Calu3 (cell line): ENCODE measurements at regions of chr6 and their contacts with region 1.

Region 1: DNA sequence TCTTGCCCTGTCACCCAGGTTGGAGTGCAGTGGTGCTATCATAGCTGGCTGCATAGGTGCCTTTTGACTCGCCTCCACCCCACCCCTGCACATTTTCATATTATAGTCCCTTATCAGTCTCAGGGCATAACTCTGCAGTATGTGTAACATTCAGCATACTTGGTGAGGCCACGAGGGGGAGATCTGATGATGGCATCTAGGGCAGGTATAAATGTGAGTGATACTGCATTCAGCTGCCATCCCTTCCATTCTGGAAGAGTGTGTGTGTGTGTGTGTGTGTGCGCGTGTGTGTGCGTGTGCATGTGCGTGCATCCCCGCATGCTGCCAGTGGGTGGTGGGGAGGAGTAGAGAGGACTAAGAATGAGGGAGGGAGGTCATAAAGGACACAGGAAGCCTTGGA is 81.4 kb downstream of the JARID2 start:
- DNase-seq: peak; percentile 19
- H3K4me3 Mint-ChIP-seq: no peak overlapping the region
- H3K27ac Mint-ChIP-seq: no peak overlapping the region
- H3K4me1 Mint-ChIP-seq: peaks cover 21% of the 10 kb centered on the region
- H3K27me3 Mint-ChIP-seq: no peaks in the 10 kb centered on the region
- CTCF ChIP-seq: no peak

Region 2: GRCh38 chr6:15171026-15171425 is 156.2 kb before region 1 on chr6:
- CTCF ChIA-PET with region 1: no interaction called
- intact Hi-C with region 1: no loop called
- DNase-seq: no peak
- H3K4me3 Mint-ChIP-seq: no peak overlapping the region
- H3K27ac Mint-ChIP-seq: no peak overlapping the region
- H3K4me1 Mint-ChIP-seq: no peaks in the 10 kb centered on the region
- H3K27me3 Mint-ChIP-seq: no peaks in the 10 kb centered on the region
- CTCF ChIP-seq: no peak

Region 3: DNA sequence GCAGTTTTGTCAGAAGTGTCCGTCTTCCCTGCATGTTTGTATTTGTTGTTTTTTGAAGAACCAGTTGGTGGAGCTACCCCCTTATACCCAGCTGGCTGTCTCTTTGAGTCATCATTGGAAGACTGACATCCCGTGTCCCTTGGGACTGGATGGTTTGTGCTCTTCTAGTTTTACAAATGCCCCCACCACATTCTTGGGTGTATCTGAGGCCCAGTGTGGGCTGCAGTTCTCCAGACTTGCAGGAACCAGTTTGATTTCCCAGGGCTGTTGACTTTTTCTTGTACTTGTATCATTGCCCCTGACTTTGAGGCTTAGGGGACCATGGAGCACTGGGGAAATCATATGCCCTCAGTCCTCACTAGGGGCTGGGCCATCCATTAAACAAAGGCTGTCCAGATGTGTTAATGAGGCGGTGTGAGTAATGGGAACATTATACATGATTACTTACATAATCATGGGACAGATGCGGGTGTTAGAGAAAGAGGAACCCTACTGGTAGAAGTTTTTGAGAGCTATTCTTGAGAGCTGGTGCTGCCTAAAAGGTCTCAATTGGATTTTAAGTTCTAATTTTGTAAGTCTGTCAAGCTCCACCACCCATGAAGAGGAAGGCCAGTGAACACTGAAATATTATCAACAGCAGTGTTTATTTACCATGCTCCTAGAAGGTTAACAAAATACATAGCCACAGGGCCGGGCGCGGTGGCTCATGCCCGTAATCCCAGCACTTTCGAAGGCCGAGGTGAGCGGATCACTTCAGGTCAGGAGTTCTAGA is 73.0 kb before region 1 on chr6:
- CTCF ChIA-PET with region 1: no interaction called
- intact Hi-C with region 1: loop called (anchors 10 kb)
- DNase-seq: no peak
- H3K4me3 Mint-ChIP-seq: no peak overlapping the region
- H3K27ac Mint-ChIP-seq: no peak overlapping the region
- H3K4me1 Mint-ChIP-seq: peaks cover 16% of the 10 kb centered on the region
- H3K27me3 Mint-ChIP-seq: no peaks in the 10 kb centered on the region
- CTCF ChIP-seq: no peak

Region 4: DNA sequence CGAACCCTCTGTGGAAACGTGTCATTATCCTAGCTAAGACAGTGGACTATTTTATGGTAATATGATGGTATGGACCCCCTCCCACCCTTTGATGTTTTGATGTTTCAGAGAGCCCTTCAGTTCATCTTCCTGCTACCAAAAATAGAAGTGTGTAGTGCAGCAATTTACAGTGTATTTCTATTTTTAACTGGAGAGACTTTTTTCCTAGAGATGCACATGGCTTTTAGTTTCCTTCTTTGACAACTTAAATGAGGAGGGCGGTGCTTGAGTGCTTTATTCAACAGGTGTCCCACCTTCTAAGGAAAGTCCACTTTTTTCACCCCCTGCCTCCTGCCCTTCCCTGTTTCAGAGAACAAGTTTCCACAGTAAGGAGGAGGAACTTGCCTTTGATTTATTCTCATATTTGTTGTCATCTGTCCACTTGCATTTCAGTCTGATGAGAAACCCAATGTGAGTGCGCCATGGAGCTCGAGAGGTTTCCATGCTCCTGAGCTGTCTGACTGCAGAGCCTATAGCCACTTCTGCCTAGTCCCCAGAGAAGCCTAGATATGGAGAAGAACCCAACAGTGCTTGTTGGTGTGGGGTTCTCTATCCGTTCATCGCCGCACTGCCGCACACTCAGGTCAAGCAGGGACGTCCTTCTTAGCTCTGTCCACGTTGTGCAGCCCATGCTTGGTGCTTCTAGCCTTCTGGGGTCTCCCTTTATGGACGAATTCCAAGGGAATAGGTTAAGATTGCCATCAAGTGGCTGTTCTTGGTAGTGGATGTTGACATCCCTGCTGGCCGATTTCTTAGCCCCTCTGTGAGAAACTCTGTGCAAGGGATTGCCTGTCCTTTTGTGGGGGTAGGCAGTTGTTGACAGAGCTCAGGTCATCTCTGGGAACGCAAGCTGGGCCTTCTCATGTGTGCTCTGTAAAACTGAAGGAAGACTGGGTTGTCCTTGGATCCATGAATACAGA is 62.8 kb after region 1 on chr6:
- CTCF ChIA-PET with region 1: no interaction called
- intact Hi-C with region 1: loop called (anchors 5 kb)
- DNase-seq: peak; percentile 15
- H3K4me3 Mint-ChIP-seq: no peak overlapping the region
- H3K27ac Mint-ChIP-seq: no peak overlapping the region
- H3K4me1 Mint-ChIP-seq: peaks cover 7% of the 10 kb centered on the region
- H3K27me3 Mint-ChIP-seq: no peaks in the 10 kb centered on the region
- CTCF ChIP-seq: peak; percentile 50

Region 5: GRCh38 chr6:15441215-15441868 is 114.1 kb after region 1 on chr6:
- CTCF ChIA-PET with region 1: interaction called, 3 read pairs
- intact Hi-C with region 1: loop called (anchors 10 kb)
- DNase-seq: peak; percentile 39
- H3K4me3 Mint-ChIP-seq: no peak overlapping the region
- H3K27ac Mint-ChIP-seq: no peak overlapping the region
- H3K4me1 Mint-ChIP-seq: peaks cover 35% of the 10 kb centered on the region
- H3K27me3 Mint-ChIP-seq: no peaks in the 10 kb centered on the region
- CTCF ChIP-seq: peak; percentile 13